Motor neuron (in vitro differentiated cells): ENCODE measurements at regions of chr9 and their contacts with region 1.

Region 1: DNA sequence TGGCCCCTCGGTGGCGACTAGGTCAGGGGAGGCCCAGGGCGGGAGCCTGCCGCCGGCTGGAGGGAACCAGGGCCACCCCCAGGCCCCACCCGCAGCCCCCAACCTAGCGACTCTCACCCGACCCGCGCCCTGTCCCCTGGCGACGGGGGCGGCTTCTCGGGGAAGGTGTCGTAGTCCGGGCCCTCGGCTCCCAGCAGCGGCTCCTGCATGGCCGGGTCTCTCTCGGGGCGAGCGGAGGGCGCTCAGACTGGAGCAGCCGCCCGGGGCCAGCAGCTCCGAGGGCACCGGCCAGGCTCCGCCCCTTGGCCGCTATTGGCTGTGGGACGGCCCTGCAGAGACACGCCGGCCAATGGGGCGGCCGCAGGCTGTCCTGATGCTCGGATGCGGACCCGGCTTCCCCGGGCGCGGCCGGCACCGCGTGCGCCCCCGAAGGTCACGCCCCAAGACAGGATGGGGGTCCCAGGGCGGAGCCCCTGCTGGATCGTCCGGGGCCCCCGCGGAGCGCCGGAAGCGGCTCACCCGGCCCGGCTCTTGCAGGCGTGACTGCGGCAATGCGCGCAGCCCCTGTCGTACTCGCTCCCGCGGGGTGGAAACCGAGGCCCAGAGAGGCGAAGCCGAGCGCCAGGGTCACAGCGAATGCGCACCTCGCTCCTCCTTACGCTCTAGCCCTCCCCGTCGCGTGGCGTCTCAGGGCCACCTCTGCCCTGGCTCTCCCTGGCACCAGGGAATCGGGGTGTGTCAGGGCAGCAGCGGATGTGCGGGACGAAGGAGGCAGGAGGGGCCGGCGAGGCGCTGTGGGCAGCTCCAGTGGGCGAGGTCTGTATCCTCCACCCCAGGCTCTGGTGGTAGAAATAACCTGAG is at the start of gene SLC2A6:
- ATAC-seq: peak; percentile 96 to 99 (median 98)
- H3K4me3 ChIP-seq: peak within 1 kb of the TSS; percentile 49 to 73 (median 63)
- H3K27ac ChIP-seq: peak within 1 kb of the TSS; percentile 54 to 72
- H3K4me1 ChIP-seq: peaks cover 11 to 13% of the 10 kb centered on the region in 2 donors
- total RNA-seq, gene SLC2A6: 4.7 to 23.0 (median 9.7) TPM

Region 2: DNA sequence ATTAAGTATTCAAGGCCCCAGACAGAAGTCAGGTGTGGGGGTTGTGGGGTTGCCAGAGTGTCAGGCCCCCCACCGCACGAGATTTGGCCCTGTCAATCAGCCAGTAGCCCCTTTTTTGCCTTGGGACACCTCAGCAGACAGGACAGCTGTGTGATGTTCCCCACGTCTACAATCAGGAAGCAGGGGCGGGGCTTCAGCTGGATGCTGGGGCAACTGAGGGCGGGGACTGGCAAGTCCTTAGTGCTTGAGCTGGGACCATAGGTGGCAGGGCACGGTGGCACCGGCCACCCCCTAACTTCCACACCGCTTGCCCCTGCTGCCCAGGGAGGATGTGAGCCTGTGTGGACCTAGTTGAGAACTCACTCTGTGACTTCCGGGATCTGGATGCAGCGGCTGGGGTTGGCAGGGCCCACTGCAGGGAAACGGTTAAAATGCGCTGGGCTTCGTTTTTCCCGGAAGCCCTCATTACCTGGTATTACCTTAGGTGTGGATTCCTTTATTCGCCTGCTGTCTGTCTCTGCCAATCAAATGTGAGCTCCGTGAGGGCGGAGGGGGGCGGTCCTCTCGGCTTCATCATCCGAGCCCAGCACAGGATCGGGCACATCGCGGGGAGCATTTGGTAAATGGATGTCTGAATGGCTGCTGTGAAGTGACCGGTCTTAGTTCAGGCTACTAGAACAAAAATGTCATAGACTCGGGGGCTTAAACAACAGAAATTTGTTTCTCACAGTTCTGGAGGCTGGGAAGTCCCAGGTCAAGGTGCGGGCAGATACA is 455.8 kb before region 1 on chr9:
- in situ Hi-C with region 1: loop called in 3 of 9 experiments (anchors 25 kb)
- ATAC-seq: peak in 1 of 8 experiments; percentile 14
- H3K4me3 ChIP-seq: no peak overlapping the region
- H3K27ac ChIP-seq: no peak overlapping the region
- H3K4me1 ChIP-seq: peaks cover 0 to 5% of the 10 kb centered on the region in 2 donors

Region 3: DNA sequence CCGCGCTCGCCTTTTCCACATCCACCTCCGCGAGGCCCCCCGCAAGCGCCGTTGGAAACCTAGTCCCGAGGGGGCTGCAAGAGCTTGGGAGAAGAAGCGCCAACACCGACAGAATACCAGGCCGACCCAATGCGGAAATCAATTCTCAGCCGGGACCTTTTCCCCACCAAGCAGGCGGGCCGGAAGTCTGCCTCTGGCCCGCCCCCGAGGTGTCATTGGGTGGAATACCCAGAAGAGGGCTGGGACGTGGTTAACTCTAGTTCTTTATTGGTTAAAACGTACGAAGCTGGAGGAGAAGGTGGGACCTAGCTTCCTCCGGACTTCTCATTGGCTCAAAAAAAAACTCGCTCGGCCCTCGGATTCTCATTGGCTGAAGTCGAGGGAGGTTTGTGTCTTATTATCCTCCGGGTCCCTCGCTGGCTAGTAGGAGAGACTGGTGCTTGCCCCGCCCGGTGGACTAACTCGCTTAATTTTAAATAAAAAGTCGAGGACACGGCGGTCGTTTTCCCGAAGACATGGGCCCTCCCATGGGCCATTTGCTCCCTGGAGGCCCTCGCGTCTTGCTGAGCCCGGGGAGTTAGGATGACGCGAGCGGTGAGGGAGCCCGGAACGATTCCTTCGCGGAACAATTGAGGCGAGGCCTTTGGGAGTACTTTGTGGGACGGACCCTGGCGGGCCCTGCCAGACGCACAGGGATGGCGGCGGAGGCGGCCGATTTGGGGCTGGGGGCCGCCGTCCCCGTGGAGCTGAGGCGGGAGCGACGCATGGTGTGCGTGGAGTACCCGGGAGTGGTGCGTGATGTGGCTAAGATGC is 448.6 kb before region 1 on chr9 and contains the start of gene GTF3C5:
- in situ Hi-C with region 1: loop called in 2 of 9 experiments (anchors 25 kb)
- ATAC-seq: peak; percentile 94 to 98 (median 97)
- H3K4me3 ChIP-seq: peak within 1 kb of the TSS; percentile 72 to 92 (median 80)
- H3K27ac ChIP-seq: peak within 1 kb of the TSS; percentile 86 to 93
- H3K4me1 ChIP-seq: peaks cover 16 to 18% of the 10 kb centered on the region in 2 donors
- total RNA-seq, gene GTF3C5: 35.8 to 77.3 (median 45.1) TPM

Region 4: GRCh38 chr9:133184962-133185361 is 294.1 kb before region 1 on chr9:
- in situ Hi-C with region 1: loop called in 2 of 9 experiments (anchors 25 kb)
- ATAC-seq: peak; percentile 40 to 85 (median 72)
- H3K4me3 ChIP-seq: no peak overlapping the region
- H3K27ac ChIP-seq: no peak overlapping the region
- H3K4me1 ChIP-seq: peaks cover 0 to 2% of the 10 kb centered on the region in 2 donors

Region 5: DNA sequence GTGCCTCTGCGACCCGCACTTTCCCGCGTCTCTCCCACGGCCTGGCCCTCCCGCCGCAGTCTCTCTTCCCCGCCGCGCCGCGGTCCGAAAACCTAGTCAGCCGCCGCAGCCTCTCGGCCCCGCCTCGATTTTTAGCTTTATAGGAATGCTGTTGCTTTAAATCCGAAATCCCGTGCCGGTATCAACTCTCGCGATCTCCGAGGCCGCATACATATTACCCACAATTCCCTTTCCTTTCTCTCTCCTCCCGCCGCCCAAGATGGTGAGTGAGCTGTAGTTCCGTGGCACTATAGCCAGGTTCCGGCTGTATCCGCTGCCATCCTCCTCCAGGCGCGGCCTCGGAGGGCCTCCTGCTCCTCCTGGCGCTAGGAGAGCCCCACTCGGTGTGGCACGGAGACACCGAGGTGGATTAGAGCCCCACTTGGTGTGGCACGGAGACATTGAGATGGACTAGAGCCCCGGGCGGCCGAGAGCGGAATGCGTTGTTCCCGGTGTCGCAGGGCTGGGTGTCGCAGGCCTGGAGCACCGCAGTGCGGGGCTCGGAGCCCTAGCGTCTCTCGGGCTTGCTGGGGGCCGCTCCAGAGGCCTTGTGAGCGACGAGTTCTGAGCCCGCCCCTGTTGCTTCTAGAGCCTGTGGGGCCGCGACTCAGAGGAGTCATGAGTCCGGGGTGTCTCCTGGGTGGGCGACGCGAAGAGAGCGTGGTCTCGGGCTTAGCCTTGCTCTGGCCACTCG is 130.9 kb before region 1 on chr9 and contains the starts of genes MED22 and RPL7A:
- in situ Hi-C with region 1: no loop called
- ATAC-seq: peak; percentile 62 to 86 (median 80)
- H3K4me3 ChIP-seq: peak within 1 kb of the TSS; percentile 67 to 97 (median 92)
- H3K27ac ChIP-seq: peak within 1 kb of the TSS; percentile 90 to 96
- H3K4me1 ChIP-seq: peaks cover 9 to 18% of the 10 kb centered on the region in 2 donors
- total RNA-seq, gene MED22: 14.2 to 36.9 (median 20.4) TPM
- total RNA-seq, gene RPL7A: 2,000 to 3,318 (median 3,013) TPM